ENCODE measurements at regions of chr1 and their contacts with region 1.

Region 1: GRCh38 chr1:169485544-169486278 is at the start of gene SLC19A2:
- DNase-seq: peak; percentile 96
- H3K4me3 Mint-ChIP-seq: peak within 1 kb of the TSS; percentile 79
- H3K27ac Mint-ChIP-seq: peak within 1 kb of the TSS; percentile 83
- H3K4me1 Mint-ChIP-seq: peaks cover 53% of the 10 kb centered on the region
- H3K27me3 Mint-ChIP-seq: no peaks in the 10 kb centered on the region
- total RNA-seq, gene SLC19A2: 8.6 to 9.4 TPM

Region 2: GRCh38 chr1:169044296-169044695 is 441.4 kb before region 1 on chr1:
- CTCF ChIA-PET with region 1: no interaction called
- POLR2A ChIA-PET with region 1: no interaction called
- intact Hi-C with region 1: loop called (anchors 5 kb)
- DNase-seq: peak; percentile 57
- H3K4me3 Mint-ChIP-seq: no peak overlapping the region
- H3K27ac Mint-ChIP-seq: peak overlapping the region; percentile 35
- H3K4me1 Mint-ChIP-seq: peaks cover 53% of the 10 kb centered on the region
- H3K27me3 Mint-ChIP-seq: no peaks in the 10 kb centered on the region

Region 3: GRCh38 chr1:169133801-169134502 is 351.8 kb before region 1 on chr1:
- CTCF ChIA-PET with region 1: no interaction called
- POLR2A ChIA-PET with region 1: no interaction called
- intact Hi-C with region 1: loop called (anchors 10 kb)
- DNase-seq: no peak
- H3K4me3 Mint-ChIP-seq: no peak overlapping the region
- H3K27ac Mint-ChIP-seq: no peak overlapping the region
- H3K4me1 Mint-ChIP-seq: peaks cover 5% of the 10 kb centered on the region
- H3K27me3 Mint-ChIP-seq: no peaks in the 10 kb centered on the region

Region 4: DNA sequence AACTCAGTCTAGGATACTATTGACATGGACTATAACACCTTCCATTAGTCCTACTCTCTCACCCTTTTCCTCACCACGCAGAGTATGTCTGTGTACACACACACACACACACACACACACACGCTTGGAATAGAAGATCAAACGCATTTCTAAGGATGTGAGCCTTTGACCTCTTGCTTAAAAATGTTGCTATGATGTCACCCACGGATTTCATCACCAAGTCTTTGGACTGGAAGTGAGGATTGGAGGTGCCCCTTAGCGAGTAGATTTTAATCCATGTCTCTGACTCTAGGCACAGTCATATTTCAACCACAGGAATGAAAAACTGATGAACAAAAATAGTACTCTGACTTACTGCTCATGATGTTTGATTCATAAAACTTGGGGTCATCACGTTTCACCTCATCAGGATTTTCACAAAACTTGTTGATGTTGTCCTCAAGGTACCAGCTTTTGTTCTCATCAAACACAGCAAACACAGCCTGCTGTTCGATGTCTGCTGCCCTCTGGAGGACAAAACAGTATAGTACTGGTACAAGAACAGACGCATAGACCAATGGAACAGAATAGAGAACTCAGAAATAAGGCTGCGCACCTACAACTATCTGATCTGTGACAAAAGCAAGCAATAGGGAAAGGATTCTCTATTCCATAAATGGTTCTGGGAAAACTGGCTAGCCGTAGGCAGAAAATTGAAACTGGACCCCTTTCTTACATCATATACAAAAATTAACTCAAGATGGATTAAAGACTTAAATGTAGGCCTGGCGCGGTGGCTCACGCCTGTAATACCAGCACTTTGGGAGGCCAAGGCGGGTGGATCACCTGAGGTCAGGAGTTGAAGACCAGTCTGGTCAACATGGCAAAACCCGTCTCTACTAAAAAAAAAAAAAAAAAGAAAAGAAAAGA is 60.6 kb after region 1 on chr1:
- CTCF ChIA-PET with region 1: no interaction called
- POLR2A ChIA-PET with region 1: no interaction called
- intact Hi-C with region 1: loop called (anchors 5 kb)
- DNase-seq: peak; percentile 49
- H3K4me3 Mint-ChIP-seq: no peak overlapping the region
- H3K27ac Mint-ChIP-seq: no peak overlapping the region
- H3K4me1 Mint-ChIP-seq: no peaks in the 10 kb centered on the region
- H3K27me3 Mint-ChIP-seq: no peaks in the 10 kb centered on the region

Region 5: GRCh38 chr1:169893494-169894362 is 408.0 kb after region 1 on chr1 and contains the start of gene SCYL3:
- CTCF ChIA-PET with region 1: no interaction called
- POLR2A ChIA-PET with region 1: no interaction called
- intact Hi-C with region 1: loop called (anchors 1 kb)
- DNase-seq: peak; percentile 92
- H3K4me3 Mint-ChIP-seq: peak within 1 kb of the TSS; percentile 82
- H3K27ac Mint-ChIP-seq: peak within 1 kb of the TSS; percentile 98
- H3K4me1 Mint-ChIP-seq: peaks cover 38% of the 10 kb centered on the region
- H3K27me3 Mint-ChIP-seq: no peaks in the 10 kb centered on the region
- total RNA-seq, gene SCYL3: 11.1 to 12.4 TPM